ENCODE measurements at regions of chr1 and their contacts with region 1.

Region 1: GRCh38 chr1:6579374-6580118 is at the start of gene ZBTB48:
- DNase-seq: peak; percentile 97
- H3K4me3 ChIP-seq: peak within 1 kb of the TSS; percentile 57 to 98 (median 65)
- H3K27ac ChIP-seq: peak within 1 kb of the TSS; percentile 57
- H3K4me1 ChIP-seq: peaks cover 14% of the 10 kb centered on the region
- H3K27me3 ChIP-seq: no peaks in the 10 kb centered on the region
- CTCF ChIP-seq: no peak
- POLR2A ChIP-seq: peak; percentile 98
- total RNA-seq, gene ZBTB48: 25.1 and 29.2 TPM in 2 replicates

Region 2: GRCh38 chr1:6547301-6547700 is 32.2 kb before region 1 on chr1:
- CTCF ChIA-PET with region 1: no interaction called
- POLR2A ChIA-PET with region 1: no interaction called
- dilution Hi-C with region 1: no loop called
- intact Hi-C with region 1: no loop called
- DNase-seq: peak; percentile 60
- H3K4me3 ChIP-seq: no peak overlapping the region
- H3K27ac ChIP-seq: no peak overlapping the region
- H3K4me1 ChIP-seq: peaks cover 35% of the 10 kb centered on the region
- H3K27me3 ChIP-seq: no peaks in the 10 kb centered on the region
- CTCF ChIP-seq: peak; percentile 15 to 20
- POLR2A ChIP-seq: no peak

Region 3: DNA sequence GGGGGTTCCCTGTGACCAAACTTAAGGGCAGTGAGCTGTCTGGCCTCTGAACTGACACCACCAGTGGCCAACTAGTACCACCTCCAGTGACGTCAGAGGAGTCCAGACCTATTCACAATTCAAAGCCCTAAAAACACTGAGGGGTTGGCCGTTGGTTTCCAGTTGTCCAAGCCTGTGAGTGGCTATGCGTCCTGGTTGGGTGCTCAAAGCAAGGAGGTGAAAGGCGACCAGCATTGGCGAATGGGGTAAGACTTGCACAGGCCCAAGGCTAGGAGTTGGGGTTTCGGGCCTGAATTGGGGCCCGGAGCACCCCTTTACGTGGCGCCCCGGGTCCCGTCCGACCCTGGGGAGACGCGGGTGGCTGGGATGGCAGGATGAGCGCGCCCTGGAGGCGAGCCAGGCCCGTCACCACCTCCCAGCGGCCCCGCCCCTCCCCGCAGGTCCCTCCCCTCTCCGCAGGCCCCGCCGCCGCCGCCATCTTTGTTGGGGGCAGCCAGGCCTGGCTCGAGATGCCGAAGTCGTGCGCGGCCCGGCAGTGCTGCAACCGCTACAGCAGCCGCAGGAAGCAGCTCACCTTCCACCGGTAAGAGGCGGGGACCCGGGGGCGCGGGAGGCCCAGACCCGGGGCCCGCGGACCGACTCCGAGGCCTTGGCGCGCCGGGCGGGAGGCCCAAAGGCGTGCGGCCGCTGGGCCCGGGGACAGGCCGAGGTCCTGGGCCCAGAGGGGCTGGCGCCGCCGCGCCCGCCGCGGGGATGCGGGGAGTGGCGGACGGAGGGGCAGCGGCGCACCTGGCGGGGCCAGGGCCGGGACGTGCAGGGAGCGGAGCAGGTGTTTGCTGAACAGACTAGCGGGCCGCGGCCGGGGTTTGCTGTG is 45.4 kb after region 1 on chr1 and contains the start of gene THAP3:
- CTCF ChIA-PET with region 1: no interaction called
- POLR2A ChIA-PET with region 1: no interaction called
- dilution Hi-C with region 1: no loop called
- intact Hi-C with region 1: loop called (anchors 1 kb)
- DNase-seq: peak; percentile 82
- H3K4me3 ChIP-seq: peak within 1 kb of the TSS; percentile 54 to 72 (median 58)
- H3K27ac ChIP-seq: peak within 1 kb of the TSS; percentile 13
- H3K4me1 ChIP-seq: peaks cover 4% of the 10 kb centered on the region
- H3K27me3 ChIP-seq: no peaks in the 10 kb centered on the region
- CTCF ChIP-seq: no peak
- POLR2A ChIP-seq: no peak
- total RNA-seq, gene THAP3: 15.2 and 16.7 TPM in 2 replicates

Region 4: GRCh38 chr1:6672558-6672957 is 93.0 kb after region 1 on chr1:
- CTCF ChIA-PET with region 1: no interaction called
- POLR2A ChIA-PET with region 1: no interaction called
- dilution Hi-C with region 1: no loop called
- intact Hi-C with region 1: no loop called
- DNase-seq: no peak
- H3K4me3 ChIP-seq: no peak overlapping the region
- H3K27ac ChIP-seq: no peak overlapping the region
- H3K4me1 ChIP-seq: no peaks in the 10 kb centered on the region
- H3K27me3 ChIP-seq: no peaks in the 10 kb centered on the region
- CTCF ChIP-seq: no peak
- POLR2A ChIP-seq: no peak